ENCODE measurements at regions of chr11 and their contacts with region 1.

Region 1: DNA sequence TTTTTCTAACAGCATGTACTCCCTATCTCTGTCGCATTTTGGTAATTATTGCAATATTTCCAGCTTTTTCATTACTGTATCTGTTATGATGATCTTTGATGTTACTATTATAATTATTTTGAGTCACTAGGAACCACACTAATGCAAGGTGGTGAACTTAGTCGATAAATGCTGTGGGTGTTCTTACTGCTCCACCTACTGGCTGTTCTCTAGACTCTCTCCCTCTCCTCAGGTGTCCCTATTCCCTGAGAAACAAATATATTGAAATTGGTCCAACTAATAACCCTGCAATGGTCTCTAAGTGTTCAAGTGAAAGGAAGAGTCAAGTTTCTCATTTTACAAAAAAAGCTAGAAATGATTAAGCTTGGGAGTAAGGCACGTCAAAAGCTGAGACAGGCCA is 10.5 kb downstream of the ARL14EP start:
- DNase-seq: no peak
- ATAC-seq: no peak
- H3K4me3 Mint-ChIP-seq: no peak overlapping the region
- H3K27ac Mint-ChIP-seq: no peak overlapping the region
- H3K4me1 Mint-ChIP-seq: peaks cover 18% of the 10 kb centered on the region
- H3K27me3 Mint-ChIP-seq: no peaks in the 10 kb centered on the region
- CTCF ChIP-seq: no peak

Region 2: GRCh38 chr11:29432719-29433325 is 900.6 kb before region 1 on chr11:
- CTCF ChIA-PET with region 1: no interaction called
- POLR2A ChIA-PET with region 1: no interaction called
- intact Hi-C with region 1: loop called (anchors 10 kb)
- DNase-seq: no peak
- ATAC-seq: no peak
- H3K4me3 Mint-ChIP-seq: no peak overlapping the region
- H3K27ac Mint-ChIP-seq: no peak overlapping the region
- H3K4me1 Mint-ChIP-seq: no peaks in the 10 kb centered on the region
- H3K27me3 Mint-ChIP-seq: no peaks in the 10 kb centered on the region
- CTCF ChIP-seq: no peak

Measured in activated B cell treated with CpG ODN at 0.5 μM for 24 hours (primary cell).